ENCODE measurements at regions of chr5 and their contacts with region 1.

Region 1: DNA sequence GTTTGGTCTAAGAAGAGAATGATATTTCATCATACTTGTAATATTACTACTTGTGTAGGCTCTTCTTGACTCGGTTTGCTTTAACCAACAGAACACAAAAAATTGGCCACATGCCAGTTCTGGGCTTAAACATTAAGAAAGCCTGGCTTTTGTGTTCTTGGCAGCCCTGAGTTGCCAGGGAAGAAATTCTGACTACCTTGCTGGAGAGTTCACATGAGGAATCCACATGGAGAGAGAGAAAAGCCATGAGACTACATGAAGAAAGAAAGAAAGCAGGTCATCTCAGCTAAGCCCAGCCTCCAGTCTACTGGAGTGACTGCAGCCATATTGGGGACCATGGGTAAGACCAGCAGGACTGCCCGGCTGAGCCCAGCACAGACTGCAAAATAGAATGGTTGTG is 524.8 kb downstream of the RAB3C start:
- DNase-seq: no peak
- H3K4me3 ChIP-seq: no peak overlapping the region
- H3K27ac ChIP-seq: no peak overlapping the region
- H3K4me1 ChIP-seq: no peaks in the 10 kb centered on the region
- H3K27me3 ChIP-seq: no peaks in the 10 kb centered on the region
- CTCF ChIP-seq: no peak

Region 2: DNA sequence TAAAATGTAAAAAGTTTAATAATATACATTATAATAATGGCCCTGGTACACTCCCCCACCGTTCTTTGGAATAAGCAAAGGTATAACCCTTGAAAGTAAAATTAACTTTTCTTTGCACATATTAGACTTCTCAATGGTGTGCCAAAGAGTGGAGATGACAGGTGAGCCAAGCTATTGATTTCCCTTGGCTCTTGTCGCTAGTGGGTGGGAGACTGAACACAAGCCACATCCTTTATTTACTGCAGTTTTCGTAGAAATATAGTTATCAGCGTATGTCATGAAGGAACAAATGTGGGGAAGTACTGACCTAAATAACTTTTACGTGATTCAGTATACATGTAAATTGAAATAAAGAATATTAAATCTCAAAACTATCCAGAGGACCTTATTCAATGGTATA is 24.4 kb after region 1 on chr5:
- CTCF ChIA-PET with region 1: no interaction called
- POLR2A ChIA-PET with region 1: interaction called, 11 read pairs
- intact Hi-C with region 1: no loop called
- DNase-seq: no peak
- H3K4me3 ChIP-seq: no peak overlapping the region
- H3K27ac ChIP-seq: no peak overlapping the region
- H3K4me1 ChIP-seq: peaks cover 8% of the 10 kb centered on the region; the same call in 1 of the 2 replicates
- H3K27me3 ChIP-seq: no peaks in the 10 kb centered on the region
- CTCF ChIP-seq: no peak

Region 3: DNA sequence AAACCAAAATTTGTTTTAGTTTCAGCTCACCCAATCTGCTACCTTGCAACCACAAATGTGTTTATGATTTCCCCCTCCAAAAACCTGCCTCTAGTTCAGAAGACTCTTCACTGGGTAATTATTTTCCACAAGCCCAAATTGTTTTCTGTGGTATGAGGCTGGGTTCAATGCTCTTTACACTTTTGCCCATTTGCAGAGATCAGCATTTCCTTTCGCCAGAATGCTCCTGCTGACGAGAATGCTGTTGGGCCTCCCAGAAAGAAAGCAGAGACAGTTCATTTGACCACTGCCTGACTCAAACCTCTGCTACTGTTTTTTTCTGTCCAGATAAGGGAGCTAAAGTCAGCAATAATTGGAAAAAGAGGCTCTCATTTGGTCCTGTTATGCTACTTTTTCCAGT is 358.6 kb after region 1 on chr5:
- CTCF ChIA-PET with region 1: no interaction called
- POLR2A ChIA-PET with region 1: no interaction called
- intact Hi-C with region 1: no loop called
- DNase-seq: no peak
- H3K4me3 ChIP-seq: no peak overlapping the region
- H3K27ac ChIP-seq: no peak overlapping the region
- H3K4me1 ChIP-seq: no peaks in the 10 kb centered on the region
- H3K27me3 ChIP-seq: no peaks in the 10 kb centered on the region
- CTCF ChIP-seq: no peak

Measured in PC-9 (cell line).